ENCODE measurements at regions of chr7 and their contacts with region 1.

Region 1: DNA sequence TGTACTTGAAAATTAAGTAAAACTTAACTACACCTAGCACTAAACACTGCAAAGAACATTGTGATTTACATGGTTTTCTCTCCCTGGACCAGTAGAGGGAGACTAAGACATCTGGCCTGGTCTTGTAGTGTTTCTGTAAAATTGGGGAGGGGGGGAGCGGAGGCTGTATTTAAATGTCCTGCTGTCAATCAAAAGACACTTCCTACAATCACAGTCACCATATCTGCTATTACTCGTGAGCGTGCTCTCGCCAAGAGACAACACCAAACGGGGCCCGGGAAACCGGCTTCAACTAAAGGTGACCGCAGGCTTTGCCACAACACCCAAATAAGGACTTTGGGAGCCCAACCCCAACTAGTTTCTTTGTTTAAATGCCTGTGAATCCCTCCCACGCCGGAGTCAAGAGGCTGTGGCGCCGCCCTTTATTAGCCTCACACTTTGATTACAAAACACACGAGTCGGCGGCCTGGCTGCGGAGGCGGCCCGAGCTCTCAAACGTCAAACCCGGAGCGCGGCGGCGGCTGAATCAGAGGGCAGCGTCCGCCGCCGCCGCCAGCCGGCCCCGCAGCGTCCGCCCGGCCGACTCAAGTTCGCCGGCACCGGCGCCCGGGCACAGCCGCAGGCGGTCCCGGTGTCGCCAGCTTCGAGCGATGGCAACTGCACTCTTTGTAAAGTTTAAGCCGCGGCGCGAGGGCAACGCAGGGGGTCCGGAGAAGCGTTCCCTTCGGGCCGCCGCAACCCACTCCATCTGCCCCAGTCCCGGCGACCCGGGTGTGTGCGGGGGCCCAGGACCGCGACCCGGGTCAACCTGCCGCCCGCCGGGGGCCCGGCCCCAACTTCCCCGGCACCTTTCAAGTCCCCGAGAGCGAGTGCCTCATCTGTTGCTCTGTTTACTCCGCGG is 1.3 kb downstream of the KDM7A start:
- DNase-seq: peak; percentile 95
- ATAC-seq: peak; percentile 70
- H3K4me3 Mint-ChIP-seq: peak overlapping the region; percentile 96
- H3K27ac Mint-ChIP-seq: peak overlapping the region; percentile 83
- H3K4me1 Mint-ChIP-seq: peaks cover 49% of the 10 kb centered on the region
- H3K27me3 Mint-ChIP-seq: peaks cover 3% of the 10 kb centered on the region

Region 2: DNA sequence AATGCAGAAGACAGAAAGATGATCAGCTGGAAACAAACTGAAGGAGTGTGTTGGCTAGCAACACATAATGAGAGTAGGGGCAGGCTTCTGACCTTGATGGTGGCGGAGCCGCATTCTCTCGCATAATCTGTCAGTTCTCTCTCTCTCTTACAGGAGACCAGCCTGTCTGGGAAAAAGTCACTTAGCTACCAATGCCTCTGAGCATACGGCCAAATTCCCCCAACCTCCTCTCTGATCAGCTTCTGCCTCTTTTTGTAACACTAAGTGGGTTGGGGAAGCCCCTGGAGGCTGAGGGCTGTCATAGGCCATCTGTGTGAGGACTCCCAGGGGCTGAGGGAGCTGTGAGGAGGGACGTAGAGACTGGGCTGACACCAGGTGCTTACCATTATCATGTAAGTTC is 502.2 kb before region 1 on chr7:
- CTCF ChIA-PET with region 1: no interaction called
- POLR2A ChIA-PET with region 1: no interaction called
- intact Hi-C with region 1: loop called in 1 of 2 experiments (anchors 5 kb)
- DNase-seq: peak; percentile 75
- ATAC-seq: peak; percentile 89
- H3K4me3 Mint-ChIP-seq: peak overlapping the region; percentile 3
- H3K27ac Mint-ChIP-seq: peak overlapping the region; percentile 88
- H3K4me1 Mint-ChIP-seq: peaks cover 56% of the 10 kb centered on the region
- H3K27me3 Mint-ChIP-seq: no peaks in the 10 kb centered on the region

Region 3: GRCh38 chr7:140165422-140165821 is 10.0 kb before region 1 on chr7:
- CTCF ChIA-PET with region 1: interaction called, 3 read pairs
- POLR2A ChIA-PET with region 1: interaction called, 4 read pairs
- intact Hi-C with region 1: loop called in 1 of 2 experiments (anchors 1 kb)
- DNase-seq: peak; percentile 28
- ATAC-seq: peak; percentile 90
- H3K4me3 Mint-ChIP-seq: peak overlapping the region; percentile 26
- H3K27ac Mint-ChIP-seq: peak overlapping the region; percentile 95
- H3K4me1 Mint-ChIP-seq: peaks cover 78% of the 10 kb centered on the region
- H3K27me3 Mint-ChIP-seq: no peaks in the 10 kb centered on the region

Region 4: DNA sequence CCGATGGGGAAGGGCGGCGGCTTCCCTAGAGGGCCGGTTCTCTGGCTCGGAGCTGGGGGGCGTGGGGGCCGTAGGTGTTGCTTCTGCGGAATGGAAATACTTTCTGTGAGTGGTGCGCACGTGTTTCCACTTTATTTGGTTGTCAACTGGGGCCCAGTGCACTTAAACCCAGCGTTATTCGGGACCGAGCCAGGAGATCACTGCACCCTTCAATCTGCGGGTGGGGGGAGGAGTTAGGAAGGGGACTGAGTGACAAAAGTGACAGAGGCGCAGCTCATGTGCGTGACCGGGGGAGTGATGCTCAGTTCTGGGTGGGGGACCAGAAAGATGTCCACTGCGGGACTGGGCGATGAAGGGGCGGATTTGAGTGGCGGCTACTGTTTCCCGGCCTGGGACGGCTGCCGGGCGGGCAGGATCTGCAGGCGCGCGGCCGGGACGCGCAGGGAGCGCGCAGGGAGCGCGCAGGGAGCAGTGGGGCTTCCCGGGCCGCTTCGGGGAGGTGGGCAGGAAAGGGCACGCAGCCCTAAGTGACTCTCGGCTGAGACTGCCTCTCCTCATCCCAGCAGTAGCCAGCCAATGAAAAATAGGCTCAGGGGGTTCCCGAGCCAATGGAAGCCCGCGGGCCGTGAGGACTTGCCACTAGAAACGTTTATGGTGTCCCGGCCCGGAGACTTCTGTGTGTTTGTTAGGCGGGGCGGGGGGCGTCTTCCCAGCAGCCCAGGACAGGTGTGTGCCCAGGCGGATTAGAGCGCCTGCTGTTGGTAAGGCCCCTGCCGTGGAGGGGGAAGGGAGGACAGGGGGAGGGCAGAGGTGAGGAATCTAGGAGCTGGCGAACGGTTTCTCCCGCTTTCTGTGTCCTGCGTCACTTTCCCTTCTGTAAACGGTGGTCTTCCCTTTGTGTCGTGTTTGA is 55.6 kb after region 1 on chr7:
- CTCF ChIA-PET with region 1: interaction called, 13 read pairs
- POLR2A ChIA-PET with region 1: interaction called, 9 read pairs
- intact Hi-C with region 1: loop called (anchors 1 kb)
- DNase-seq: peak; percentile 86
- ATAC-seq: peak; percentile 65
- H3K4me3 Mint-ChIP-seq: peak overlapping the region; percentile 99
- H3K27ac Mint-ChIP-seq: peak overlapping the region; percentile 99
- H3K4me1 Mint-ChIP-seq: peaks cover 45% of the 10 kb centered on the region
- H3K27me3 Mint-ChIP-seq: no peaks in the 10 kb centered on the region

Region 5: GRCh38 chr7:140326116-140326928 is 150.9 kb after region 1 on chr7:
- CTCF ChIA-PET with region 1: no interaction called
- POLR2A ChIA-PET with region 1: no interaction called
- intact Hi-C with region 1: loop called (anchors 1 kb)
- DNase-seq: peak; percentile 72
- ATAC-seq: peak; percentile 88
- H3K4me3 Mint-ChIP-seq: no peak overlapping the region
- H3K27ac Mint-ChIP-seq: peak overlapping the region; percentile 44
- H3K4me1 Mint-ChIP-seq: no peaks in the 10 kb centered on the region
- H3K27me3 Mint-ChIP-seq: no peaks in the 10 kb centered on the region

Region 6: DNA sequence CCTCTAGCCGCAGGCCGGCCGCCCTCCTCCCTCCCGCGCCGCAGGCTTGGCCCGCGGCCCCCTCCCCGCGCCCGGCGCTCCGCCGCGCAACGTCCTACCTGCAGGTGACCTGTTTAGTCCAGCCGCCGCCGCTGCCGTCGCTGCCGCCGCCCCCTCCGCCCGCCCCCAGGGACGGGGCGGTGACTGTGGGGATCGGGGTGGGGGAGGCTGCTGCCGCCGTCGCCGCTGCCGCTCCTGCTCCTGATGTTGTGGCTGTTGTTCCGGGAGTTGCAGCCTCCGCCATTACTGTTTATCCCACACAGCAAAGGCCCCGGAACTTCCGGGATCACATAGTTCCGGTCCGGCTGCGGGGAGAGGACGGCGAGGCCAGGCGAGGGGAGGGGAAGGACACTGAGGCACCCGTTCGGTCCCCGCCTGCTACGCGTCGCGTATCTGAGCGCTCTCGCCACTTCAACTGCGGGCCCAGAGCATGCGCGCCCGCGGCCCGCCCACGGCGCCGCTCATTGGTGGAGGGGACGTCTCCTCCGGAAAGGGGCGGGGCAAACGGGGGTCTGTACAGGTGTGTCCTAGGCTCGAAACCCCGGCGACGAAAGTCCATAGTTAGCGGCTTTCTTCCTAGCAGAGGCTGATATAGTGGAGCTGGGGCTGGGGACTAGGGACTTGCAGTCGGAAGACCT is 303.7 kb after region 1 on chr7 and contains the start of gene MKRN1:
- CTCF ChIA-PET with region 1: no interaction called
- POLR2A ChIA-PET with region 1: no interaction called
- intact Hi-C with region 1: loop called (anchors 2 kb)
- DNase-seq: peak; percentile 97
- ATAC-seq: peak; percentile 95
- H3K4me3 Mint-ChIP-seq: peak within 1 kb of the TSS; percentile 99
- H3K27ac Mint-ChIP-seq: peak within 1 kb of the TSS; percentile 95
- H3K4me1 Mint-ChIP-seq: peaks cover 24% of the 10 kb centered on the region
- H3K27me3 Mint-ChIP-seq: no peaks in the 10 kb centered on the region
- total RNA-seq, gene MKRN1: 73.6 to 77.9 TPM

Region 7: GRCh38 chr7:141551094-141551781 is 1375.8 kb after region 1 on chr7 and contains the start of gene AGK:
- CTCF ChIA-PET with region 1: no interaction called
- POLR2A ChIA-PET with region 1: no interaction called
- intact Hi-C with region 1: loop called in 1 of 2 experiments (anchors 5 kb)
- DNase-seq: peak; percentile 87
- ATAC-seq: peak; percentile 95
- H3K4me3 Mint-ChIP-seq: peak within 1 kb of the TSS; percentile 88
- H3K27ac Mint-ChIP-seq: peak within 1 kb of the TSS; percentile 91
- H3K4me1 Mint-ChIP-seq: peaks cover 36% of the 10 kb centered on the region
- H3K27me3 Mint-ChIP-seq: no peaks in the 10 kb centered on the region
- total RNA-seq, gene AGK: 49.7 to 52.9 TPM